ENCODE measurements at regions of chr17 and their contacts with region 1.

Region 1: GRCh38 chr17:6831661-6832263 is at the start of gene TEKT1:
- DNase-seq: peak; percentile 49 to 86 (median 71)
- H3K4me3 ChIP-seq: peak within 1 kb of the TSS; percentile 42
- H3K4me3 Mint-ChIP-seq: peak within 1 kb of the TSS; percentile 5 to 91 (median 83)
- H3K27ac ChIP-seq: peak within 1 kb of the TSS; percentile 12
- H3K27ac Mint-ChIP-seq: peak within 1 kb of the TSS in 7 of 8 donors; percentile 22 to 95 (median 89)
- H3K4me1 ChIP-seq: peaks cover 8% of the 10 kb centered on the region
- H3K4me1 Mint-ChIP-seq: peaks cover 10 to 17% (median 17%) of the 10 kb centered on the region in 3 donors
- H3K27me3 ChIP-seq: peaks cover 33% of the 10 kb centered on the region
- H3K27me3 Mint-ChIP-seq: peaks cover 47 to 77% of the 10 kb centered on the region in 2 donors
- total RNA-seq, gene TEKT1: not detected

Region 2: DNA sequence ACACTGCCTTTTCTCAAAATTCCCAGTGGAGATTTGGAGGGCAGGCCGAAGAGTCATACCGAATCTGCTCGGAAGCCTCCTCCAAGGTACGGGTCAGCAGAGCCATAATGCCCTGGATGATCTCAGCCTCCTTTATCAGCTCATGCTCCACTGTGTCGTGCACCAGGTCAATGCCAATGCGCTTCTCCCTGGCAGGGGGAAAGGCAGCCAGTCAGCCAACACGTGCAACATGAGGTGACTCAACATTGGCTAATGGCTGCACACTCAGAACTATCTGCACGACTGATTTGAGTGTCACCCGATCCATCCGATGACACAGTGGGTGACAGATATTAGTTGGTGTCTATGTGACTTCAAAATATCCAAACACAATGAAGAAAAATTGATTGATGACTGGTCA is 16.0 kb before region 1 on chr17:
- CTCF ChIA-PET with region 1: no interaction called
- POLR2A ChIA-PET with region 1: no interaction called
- DNase-seq: no peak
- H3K4me3 ChIP-seq: no peak overlapping the region
- H3K4me3 Mint-ChIP-seq: no peak overlapping the region
- H3K27ac ChIP-seq: no peak overlapping the region
- H3K27ac Mint-ChIP-seq: no peak overlapping the region
- H3K4me1 ChIP-seq: no peaks in the 10 kb centered on the region
- H3K4me1 Mint-ChIP-seq: no peaks in the 10 kb centered on the region
- H3K27me3 ChIP-seq: no peaks in the 10 kb centered on the region
- H3K27me3 Mint-ChIP-seq: peaks cover 6 to 52% of the 10 kb centered on the region in 2 donors

Region 3: DNA sequence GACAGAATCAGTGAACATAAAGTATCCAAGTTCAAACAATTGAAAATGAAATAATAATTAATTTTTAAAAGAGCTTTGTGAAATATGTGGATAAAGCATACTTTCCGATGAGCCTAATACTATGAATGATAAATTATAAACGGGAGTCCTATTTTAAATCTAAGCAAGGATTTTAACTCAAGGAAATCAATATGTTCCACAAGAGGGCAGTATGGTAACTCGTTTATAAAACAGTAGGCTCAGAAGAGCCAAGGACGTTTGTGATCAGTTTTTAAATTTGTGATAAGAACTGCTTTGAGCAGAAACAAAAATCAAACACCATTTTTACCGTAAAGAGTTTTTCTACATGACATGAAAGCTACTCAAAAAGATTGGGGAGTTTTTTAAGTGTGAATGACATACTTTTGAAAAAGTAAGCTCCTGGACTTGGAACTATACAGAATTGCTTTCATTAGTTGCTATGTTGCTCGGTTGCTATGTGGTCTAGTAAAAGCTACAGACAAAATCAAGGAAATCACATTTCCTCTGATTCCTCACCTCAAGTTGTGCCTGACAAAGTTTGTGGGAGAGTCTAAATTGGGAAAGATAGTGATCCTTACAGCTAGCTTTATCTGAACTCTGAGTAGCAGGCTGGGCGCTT is 11.6 kb after region 1 on chr17:
- CTCF ChIA-PET with region 1: interaction called, 16 read pairs
- POLR2A ChIA-PET with region 1: no interaction called
- DNase-seq: peak in 2 of 5 donors; percentile 19 to 22
- H3K4me3 ChIP-seq: no peak overlapping the region
- H3K4me3 Mint-ChIP-seq: no peak overlapping the region
- H3K27ac ChIP-seq: no peak overlapping the region
- H3K27ac Mint-ChIP-seq: no peak overlapping the region
- H3K4me1 ChIP-seq: no peaks in the 10 kb centered on the region
- H3K4me1 Mint-ChIP-seq: peaks cover 0 to 11% (median 3%) of the 10 kb centered on the region in 3 donors
- H3K27me3 ChIP-seq: no peaks in the 10 kb centered on the region
- H3K27me3 Mint-ChIP-seq: peaks cover 30 to 61% of the 10 kb centered on the region in 2 donors

Measured in CD8-positive, alpha-beta memory T cell (primary cell).